ENCODE measurements at regions of chr6 and their contacts with region 1.

Region 1: GRCh38 chr6:47047479-47048407 is 5.6 kb upstream of the ADGRF1 start:
- DNase-seq: peak in 4 of 10 donors; percentile 24 to 33 (median 28)

Region 2: DNA sequence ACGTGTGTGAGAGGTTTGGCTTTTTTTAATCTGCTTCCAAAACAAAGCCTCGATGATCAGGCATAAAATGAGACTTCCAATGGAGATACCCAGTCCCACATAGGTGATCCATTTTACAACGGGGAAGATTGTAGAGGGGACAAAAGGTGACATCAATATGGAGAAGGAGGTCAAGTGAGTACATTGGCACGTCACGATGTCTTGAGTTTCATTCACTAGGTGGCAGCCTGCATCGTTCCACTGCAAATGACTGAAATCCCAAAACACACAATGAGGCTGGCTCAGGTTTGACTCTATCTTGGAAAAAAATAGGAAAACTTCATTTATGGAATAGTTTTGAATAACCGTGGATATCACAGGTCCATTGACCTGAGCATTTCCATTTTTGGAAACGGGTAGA is 38.2 kb before region 1 on chr6:
- intact Hi-C with region 1: loop called (anchors 5 kb)
- DNase-seq: no peak